Dendritic cell treated with granulocyte-macrophage colony-stimulating factor and Interleukin-4, amounts not matched to agents 40 ng/mL and 50 ng/mL, for 4 days (primary cell): ENCODE measurements at regions of chr1 and their contacts with region 1.

Region 1: GRCh38 chr1:983799-984473 is 2.0 kb upstream of the PERM1 start:
- H3K4me3 Mint-ChIP-seq: no peak overlapping the region
- H3K27ac Mint-ChIP-seq: no peak overlapping the region
- H3K4me1 Mint-ChIP-seq: no peaks in the 10 kb centered on the region
- H3K27me3 Mint-ChIP-seq: peaks cover 71% of the 10 kb centered on the region

Region 2: DNA sequence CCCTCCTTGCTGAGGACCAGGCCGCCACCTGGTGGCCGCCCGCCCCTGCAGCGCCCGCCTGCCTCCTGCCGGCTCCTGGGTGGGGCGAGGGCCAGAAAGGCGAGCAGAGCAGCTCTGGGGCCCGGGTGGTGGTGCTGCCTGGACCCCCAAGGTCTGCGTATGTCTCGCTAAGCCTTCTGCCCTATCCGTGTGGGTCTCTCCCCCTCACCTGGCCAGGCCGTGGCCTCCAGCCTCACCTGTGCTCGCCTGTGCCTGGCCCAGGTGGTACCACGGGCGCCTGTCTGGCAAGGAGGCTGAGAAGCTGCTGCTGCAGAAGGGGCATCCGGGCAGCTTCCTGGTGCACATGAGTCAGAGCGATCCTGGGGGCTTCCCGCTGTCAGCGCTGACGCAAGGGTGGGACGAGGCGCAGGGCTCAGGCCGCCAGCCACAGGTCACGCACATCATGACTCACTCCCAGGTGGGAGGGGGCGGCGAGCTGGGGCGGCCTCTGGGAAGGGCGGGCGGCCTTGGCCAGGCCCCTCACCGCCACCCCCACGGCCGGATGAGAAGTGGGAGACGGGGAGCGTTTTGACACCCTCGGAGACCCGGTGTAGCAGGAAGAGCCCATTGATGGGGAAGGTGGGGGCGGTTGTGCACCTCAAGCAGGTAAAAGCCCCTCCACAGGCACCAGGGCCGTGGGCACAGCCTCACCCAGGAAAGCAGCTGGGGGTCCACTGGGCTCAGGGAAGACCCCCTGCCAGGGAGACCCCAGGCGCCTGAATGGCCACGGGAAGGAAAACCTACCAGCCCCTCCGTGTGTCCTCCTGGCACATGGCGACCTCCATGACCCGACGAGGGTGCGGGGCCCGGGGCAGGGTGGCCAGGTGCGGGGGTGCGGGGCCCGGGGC is 80.3 kb after region 1 on chr1:
- intact Hi-C with region 1: loop called (anchors 2 kb)
- H3K4me3 Mint-ChIP-seq: peak overlapping the region; percentile 17
- H3K27ac Mint-ChIP-seq: no peak overlapping the region
- H3K4me1 Mint-ChIP-seq: peaks cover 56% of the 10 kb centered on the region
- H3K27me3 Mint-ChIP-seq: peaks cover 66% of the 10 kb centered on the region

Region 3: DNA sequence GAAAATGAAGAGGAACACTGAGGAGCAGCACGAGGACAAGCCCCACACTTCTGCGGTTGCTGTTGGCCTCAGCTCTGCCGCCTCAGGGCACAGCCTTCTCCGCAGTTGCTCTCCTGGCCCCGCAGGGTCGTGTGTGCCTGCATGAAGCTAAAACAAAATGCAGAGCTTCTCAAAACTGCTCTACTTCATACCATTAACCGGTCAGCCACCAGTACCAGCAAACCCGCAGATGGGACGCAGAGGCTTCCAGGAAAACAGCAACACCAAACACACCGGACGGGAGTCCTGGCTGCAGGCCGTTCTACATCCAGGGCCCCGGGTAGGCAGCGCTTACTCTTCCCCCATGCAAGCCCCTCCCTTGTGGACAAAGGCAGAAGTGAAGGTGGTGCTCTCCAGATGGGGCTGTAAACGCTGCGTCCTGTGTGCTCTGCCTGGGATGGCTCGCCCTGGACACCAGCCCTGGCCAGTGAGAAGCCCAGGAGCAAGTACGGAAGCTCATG is 139.1 kb after region 1 on chr1:
- intact Hi-C with region 1: no loop called
- H3K4me3 Mint-ChIP-seq: no peak overlapping the region
- H3K27ac Mint-ChIP-seq: no peak overlapping the region
- H3K4me1 Mint-ChIP-seq: peaks cover 11% of the 10 kb centered on the region
- H3K27me3 Mint-ChIP-seq: peaks cover 51% of the 10 kb centered on the region